ENCODE measurements at regions of chr9 and their contacts with region 1.

Region 1: DNA sequence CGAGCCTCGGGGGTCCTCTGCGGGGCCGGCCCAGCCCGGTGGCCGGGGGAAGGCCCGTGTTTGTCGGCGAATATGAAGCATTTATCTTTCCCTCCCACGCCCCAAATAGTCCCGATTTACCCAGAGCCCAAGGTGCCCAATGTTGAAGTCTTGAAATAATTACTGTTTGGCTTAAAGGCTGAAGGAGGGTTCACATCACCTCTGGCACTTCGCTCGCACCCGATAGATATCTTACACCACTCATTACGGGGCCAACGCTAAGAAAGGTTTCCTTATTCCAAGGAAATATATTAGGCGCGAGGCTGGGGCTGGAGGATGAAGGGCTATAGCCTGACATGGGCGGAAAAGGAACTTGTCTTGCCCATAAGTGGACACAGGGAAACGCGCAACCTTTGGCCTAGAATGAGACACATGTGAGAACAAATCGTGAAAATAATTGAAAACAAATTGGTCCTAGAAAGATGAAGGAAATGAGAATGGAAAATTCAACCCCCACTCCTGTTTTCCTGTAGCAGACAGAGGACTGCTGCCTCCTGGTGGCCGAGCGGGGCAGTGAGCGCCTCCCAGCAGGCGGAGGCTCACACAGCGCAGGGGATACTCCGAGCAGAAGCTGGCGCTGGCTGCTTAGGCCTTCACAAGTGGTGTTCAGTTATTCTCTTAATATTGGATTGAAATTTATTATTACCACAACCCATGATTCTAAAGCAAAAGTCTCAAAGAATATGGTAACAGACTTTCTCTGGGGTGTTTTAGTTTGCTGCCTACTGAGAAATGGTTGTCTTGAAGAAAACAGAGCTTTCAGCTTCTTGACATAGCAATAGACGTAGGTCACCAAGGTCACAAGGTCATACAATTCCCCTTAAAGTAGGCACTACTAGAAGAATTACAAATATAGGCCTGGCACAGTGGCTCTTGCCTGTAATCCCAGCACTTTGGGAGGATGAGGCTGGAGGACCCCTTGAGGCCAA is 7.9 kb downstream of the CCL21 start:
- DNase-seq: peak; percentile 61
- H3K4me3 ChIP-seq: peak overlapping the region; percentile 51 to 60 (median 60)
- H3K27ac ChIP-seq: no peak overlapping the region
- H3K4me1 ChIP-seq: peaks cover 5% of the 10 kb centered on the region
- H3K27me3 ChIP-seq: no peaks in the 10 kb centered on the region
- CTCF ChIP-seq: peak; percentile 99

Region 2: DNA sequence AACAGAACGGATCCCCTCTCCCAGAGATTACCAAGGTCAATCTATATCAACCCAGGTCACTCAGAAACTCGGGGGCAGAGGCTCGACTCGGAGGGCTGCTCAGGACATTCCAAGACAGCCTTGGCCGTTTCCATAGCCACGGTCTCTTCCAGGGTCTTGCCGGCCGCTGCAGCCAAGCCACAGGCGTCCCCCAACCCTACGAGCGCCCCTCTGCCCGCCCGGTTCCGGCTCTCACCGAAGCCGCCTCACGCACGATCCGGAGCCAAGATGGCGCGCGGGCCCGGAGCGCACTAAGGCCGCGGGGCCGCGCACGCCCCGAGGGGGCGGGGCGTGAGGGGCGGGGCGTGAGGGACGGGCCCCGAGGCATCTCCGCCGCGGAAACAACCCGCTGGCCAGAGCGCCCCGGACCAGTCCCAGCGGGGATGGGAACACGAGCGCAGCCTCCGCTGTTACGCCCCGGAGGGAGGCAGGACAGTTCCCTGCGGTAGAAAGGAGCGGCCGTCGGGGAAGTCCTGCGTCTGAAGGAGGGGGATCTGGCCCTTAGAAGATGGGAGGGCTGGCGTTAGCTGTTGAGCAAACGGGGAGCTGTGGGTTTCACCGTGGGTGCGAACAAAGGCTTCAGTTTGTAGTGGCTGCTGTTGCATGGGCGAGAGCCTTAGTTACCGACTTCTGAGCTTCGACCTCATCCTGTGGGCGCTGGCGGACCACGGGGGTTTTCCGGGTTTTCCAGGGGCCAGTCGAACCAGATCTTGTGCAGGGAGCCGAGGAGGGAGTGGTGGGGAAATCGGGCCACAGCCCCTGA is 90.0 kb before region 1 on chr9 and contains the start of gene RPP25L:
- CTCF ChIA-PET with region 1: interaction called, 3 read pairs
- dilution Hi-C with region 1: no loop called
- in situ Hi-C with region 1: no loop called
- intact Hi-C with region 1: loop called (anchors 1 kb)
- DNase-seq: peak; percentile 86
- H3K4me3 ChIP-seq: peak within 1 kb of the TSS; percentile 79 to 84 (median 82)
- H3K27ac ChIP-seq: peak within 1 kb of the TSS; percentile 82
- H3K4me1 ChIP-seq: peaks cover 20% of the 10 kb centered on the region
- H3K27me3 ChIP-seq: no peaks in the 10 kb centered on the region
- CTCF ChIP-seq: no peak
- total RNA-seq, gene RPP25L: 12.5 to 31.7 TPM

Region 3: DNA sequence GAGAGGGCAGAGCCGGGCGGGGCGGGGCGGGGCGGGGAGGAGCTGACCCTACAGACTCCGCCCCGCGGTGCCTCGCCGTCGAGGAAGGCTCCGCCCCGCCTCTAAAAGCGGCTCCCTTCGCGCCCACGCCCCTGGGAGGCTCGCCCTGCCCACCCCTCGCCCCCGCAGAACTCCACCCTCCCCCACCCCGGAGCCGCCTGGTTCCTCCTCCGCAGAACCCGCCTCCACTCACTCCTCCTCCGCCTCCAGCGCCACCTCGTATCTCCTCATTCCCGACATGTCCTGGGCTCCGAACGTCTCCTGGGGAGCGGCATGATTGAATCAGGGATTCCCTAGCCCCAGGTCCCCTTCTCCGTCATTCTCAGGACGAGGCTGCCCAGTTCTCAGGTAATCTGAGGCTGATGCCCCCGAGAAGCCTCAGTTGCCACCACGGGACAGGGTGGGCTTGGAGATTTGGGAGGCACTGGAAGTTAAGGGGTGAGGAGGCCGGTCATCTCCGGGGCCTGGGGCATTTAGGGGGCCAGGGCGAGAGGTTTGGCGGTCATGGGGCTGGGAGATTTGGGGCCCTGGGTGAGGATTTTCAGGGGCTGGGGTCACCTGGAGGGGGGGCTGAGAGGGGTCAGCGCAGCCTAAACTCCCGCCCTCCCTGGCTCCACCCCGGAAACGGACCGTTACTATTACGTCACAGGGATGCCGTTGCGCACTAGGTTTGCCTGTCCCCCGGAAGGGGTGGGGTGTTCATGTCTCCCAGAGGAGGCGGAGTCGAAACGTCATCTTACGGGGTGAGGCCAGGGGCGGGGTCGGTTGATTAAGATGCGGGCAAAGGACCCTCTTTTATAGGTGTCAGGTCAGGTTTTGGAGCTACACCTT is 36.4 kb before region 1 on chr9:
- CTCF ChIA-PET with region 1: no interaction called
- dilution Hi-C with region 1: no loop called
- in situ Hi-C with region 1: no loop called
- intact Hi-C with region 1: loop called (anchors 2 kb)
- DNase-seq: peak; percentile 89
- H3K4me3 ChIP-seq: peak overlapping the region; percentile 52 to 90 (median 66)
- H3K27ac ChIP-seq: peak overlapping the region; percentile 93
- H3K4me1 ChIP-seq: peaks cover 32% of the 10 kb centered on the region
- H3K27me3 ChIP-seq: no peaks in the 10 kb centered on the region
- CTCF ChIP-seq: no peak

Region 4: GRCh38 chr9:34759432-34760134 is 57.5 kb after region 1 on chr9:
- CTCF ChIA-PET with region 1: interaction called, 4 read pairs
- dilution Hi-C with region 1: no loop called
- in situ Hi-C with region 1: no loop called
- intact Hi-C with region 1: loop called (anchors 1 kb)
- DNase-seq: no peak
- H3K4me3 ChIP-seq: no peak overlapping the region
- H3K27ac ChIP-seq: no peak overlapping the region
- H3K4me1 ChIP-seq: no peaks in the 10 kb centered on the region
- H3K27me3 ChIP-seq: no peaks in the 10 kb centered on the region
- CTCF ChIP-seq: no peak

Region 5: GRCh38 chr9:34869390-34869789 is 167.3 kb after region 1 on chr9:
- CTCF ChIA-PET with region 1: no interaction called
- dilution Hi-C with region 1: no loop called
- in situ Hi-C with region 1: loop called in 1 of 2 experiments (anchors 25 kb)
- intact Hi-C with region 1: loop called (anchors 2 kb)
- DNase-seq: peak; percentile 10
- H3K4me3 ChIP-seq: no peak overlapping the region
- H3K27ac ChIP-seq: no peak overlapping the region
- H3K4me1 ChIP-seq: no peaks in the 10 kb centered on the region
- H3K27me3 ChIP-seq: no peaks in the 10 kb centered on the region
- CTCF ChIP-seq: peak; percentile 13 to 49

Region 6: GRCh38 chr9:34994260-34994899 is 292.3 kb after region 1 on chr9:
- CTCF ChIA-PET with region 1: no interaction called
- dilution Hi-C with region 1: no loop called
- in situ Hi-C with region 1: no loop called
- intact Hi-C with region 1: loop called (anchors 2 kb)
- DNase-seq: peak; percentile 43
- H3K4me3 ChIP-seq: no peak overlapping the region
- H3K27ac ChIP-seq: no peak overlapping the region
- H3K4me1 ChIP-seq: peaks cover 36% of the 10 kb centered on the region
- H3K27me3 ChIP-seq: no peaks in the 10 kb centered on the region
- CTCF ChIP-seq: peak; percentile 82

Measured in mammary epithelial cell (primary cell).